Prostate gland (tissue), 2 donors: ENCODE measurements at regions of chr1 and their contacts with region 1.

Region 1: DNA sequence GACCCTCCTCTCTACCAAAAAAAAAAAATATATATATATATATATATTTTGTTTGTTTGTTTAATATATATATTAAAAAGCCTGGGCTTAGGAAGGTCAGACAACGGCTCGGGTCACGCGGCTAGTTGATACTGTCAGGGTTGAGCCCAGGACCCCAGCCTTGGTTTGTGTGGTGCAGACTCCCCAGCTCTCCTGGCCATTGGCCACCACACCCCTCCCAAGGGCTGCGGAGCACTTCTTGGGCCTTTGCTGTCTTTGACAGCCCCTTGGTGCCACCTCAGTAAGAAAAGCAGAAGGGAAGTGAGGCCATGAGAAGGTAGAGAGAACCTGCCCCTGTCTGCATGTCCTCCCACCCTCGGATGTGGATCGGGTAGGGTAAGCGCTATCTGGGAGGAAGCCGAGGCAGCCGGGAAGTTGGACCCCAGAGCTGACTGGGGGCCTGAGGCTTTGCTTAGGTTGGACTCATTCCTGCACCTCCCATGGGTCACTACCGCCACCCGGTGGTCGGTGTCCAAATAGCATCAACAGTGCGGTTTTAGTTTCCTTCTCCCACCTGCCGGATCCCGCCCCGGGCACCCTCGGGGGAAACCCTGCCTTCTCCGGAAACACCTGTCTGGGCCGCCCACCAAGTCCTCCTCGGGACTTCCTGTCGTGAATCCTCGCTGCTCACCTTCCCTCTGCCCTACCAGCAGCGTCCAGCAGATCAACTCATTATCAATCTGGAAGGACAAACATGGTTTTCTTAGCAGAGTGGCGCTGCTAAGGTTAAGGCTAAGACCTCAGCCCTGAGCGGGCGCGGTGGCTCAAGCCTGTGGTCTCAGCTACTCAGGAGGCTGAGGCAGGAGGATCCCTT is 29.8 kb upstream of the GNPAT start:
- DNase-seq: peak; percentile 63
- H3K4me3 ChIP-seq: peak overlapping the region; percentile 24 to 25
- H3K27ac ChIP-seq: no peak overlapping the region
- H3K4me1 ChIP-seq: no peaks in the 10 kb centered on the region
- H3K27me3 ChIP-seq: no peaks in the 10 kb centered on the region
- CTCF ChIP-seq: peak; percentile 71 to 87 (median 82)
- POLR2A ChIP-seq: no peak

Region 2: DNA sequence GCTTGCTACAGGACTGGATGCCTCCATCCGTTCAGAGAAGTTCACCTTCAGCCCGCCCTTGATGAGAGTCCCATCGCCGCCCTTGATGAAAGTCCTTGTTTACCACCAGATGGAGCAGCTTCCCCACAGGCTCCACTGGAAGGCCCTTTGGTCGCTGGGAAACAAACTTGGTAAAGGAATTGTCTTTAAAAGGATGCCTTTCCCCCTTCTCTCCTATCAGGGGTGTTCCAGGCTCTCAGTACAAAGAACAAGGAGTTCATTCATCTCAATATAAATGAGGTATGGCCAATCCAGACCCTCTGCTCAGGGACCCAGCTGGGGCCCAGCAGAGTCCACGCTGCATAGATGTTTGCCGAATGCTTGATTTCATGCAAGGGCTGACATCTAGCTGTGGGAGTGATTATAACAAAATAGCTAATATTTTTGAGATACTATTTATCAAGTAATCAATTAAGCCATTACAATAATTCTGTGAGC is 413.3 kb before region 1 on chr1:
- intact Hi-C with region 1: loop called (anchors 5 kb)
- DNase-seq: peak; percentile 54
- H3K4me3 ChIP-seq: no peak overlapping the region
- H3K27ac ChIP-seq: no peak overlapping the region
- H3K4me1 ChIP-seq: no peaks in the 10 kb centered on the region
- H3K27me3 ChIP-seq: no peaks in the 10 kb centered on the region
- CTCF ChIP-seq: peak; percentile 45 to 83 (median 74)
- POLR2A ChIP-seq: no peak